Calu3 (cell line): ENCODE measurements at regions of chr6 and their contacts with region 1.

Region 1: GRCh38 chr6:46781478-46782378 is 11.5 kb upstream of the MEP1A start:
- DNase-seq: peak; percentile 60
- H3K4me3 Mint-ChIP-seq: no peak overlapping the region
- H3K27ac Mint-ChIP-seq: no peak overlapping the region
- H3K4me1 Mint-ChIP-seq: no peaks in the 10 kb centered on the region
- H3K27me3 Mint-ChIP-seq: no peaks in the 10 kb centered on the region
- CTCF ChIP-seq: peak; percentile 37

Region 2: DNA sequence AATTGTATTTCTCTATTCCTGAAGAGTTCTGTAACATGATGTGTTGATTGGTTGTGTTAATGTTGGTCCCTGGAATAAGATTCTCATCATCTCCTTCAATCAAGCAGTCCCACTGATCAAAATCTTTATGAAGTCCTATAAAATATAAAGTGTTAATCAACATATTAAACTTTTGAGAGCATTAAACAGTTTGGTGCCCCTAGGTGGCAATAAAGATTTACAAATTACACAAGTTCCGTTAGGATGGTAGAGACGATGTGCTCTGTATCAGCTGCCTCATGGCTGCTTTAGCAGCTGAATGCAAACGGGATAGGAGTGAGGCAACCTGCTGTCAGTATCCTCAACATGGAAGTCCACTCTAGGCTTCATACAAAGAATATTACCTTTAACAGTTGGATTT is 77.2 kb before region 1 on chr6:
- CTCF ChIA-PET with region 1: no interaction called
- intact Hi-C with region 1: loop called (anchors 1 kb)
- DNase-seq: peak; percentile 19
- H3K4me3 Mint-ChIP-seq: no peak overlapping the region
- H3K27ac Mint-ChIP-seq: no peak overlapping the region
- H3K4me1 Mint-ChIP-seq: no peaks in the 10 kb centered on the region
- H3K27me3 Mint-ChIP-seq: no peaks in the 10 kb centered on the region
- CTCF ChIP-seq: peak; percentile 34

Region 3: GRCh38 chr6:46821458-46821900 is 39.8 kb after region 1 on chr6:
- CTCF ChIA-PET with region 1: no interaction called
- intact Hi-C with region 1: no loop called
- DNase-seq: no peak
- H3K4me3 Mint-ChIP-seq: no peak overlapping the region
- H3K27ac Mint-ChIP-seq: no peak overlapping the region
- H3K4me1 Mint-ChIP-seq: peaks cover 25% of the 10 kb centered on the region
- H3K27me3 Mint-ChIP-seq: no peaks in the 10 kb centered on the region
- CTCF ChIP-seq: no peak

Region 4: GRCh38 chr6:46867411-46867810 is 85.7 kb after region 1 on chr6:
- CTCF ChIA-PET with region 1: no interaction called
- intact Hi-C with region 1: no loop called
- DNase-seq: no peak
- H3K4me3 Mint-ChIP-seq: no peak overlapping the region
- H3K27ac Mint-ChIP-seq: no peak overlapping the region
- H3K4me1 Mint-ChIP-seq: peaks cover 19% of the 10 kb centered on the region
- H3K27me3 Mint-ChIP-seq: no peaks in the 10 kb centered on the region
- CTCF ChIP-seq: no peak

Region 5: GRCh38 chr6:46993846-46994245 is 212.1 kb after region 1 on chr6:
- CTCF ChIA-PET with region 1: no interaction called
- intact Hi-C with region 1: loop called (anchors 5 kb)
- DNase-seq: peak; percentile 37
- H3K4me3 Mint-ChIP-seq: no peak overlapping the region
- H3K27ac Mint-ChIP-seq: peak overlapping the region; percentile 2
- H3K4me1 Mint-ChIP-seq: peaks cover 79% of the 10 kb centered on the region
- H3K27me3 Mint-ChIP-seq: no peaks in the 10 kb centered on the region
- CTCF ChIP-seq: no peak